Activated T-helper 2 cell treated with anti-CD3 and anti-CD28 coated beads, Interferon-gamma antibody, Interleukin-2, Interleukin-4, amounts not matched to agents 10 μg/mL and 5 μg/mL and 100 μg/mL, durations not matched to agents 14 hours and 24 hours and 36 hours (primary cell): ENCODE measurements at regions of chr1 and their contacts with region 1.

Region 1: DNA sequence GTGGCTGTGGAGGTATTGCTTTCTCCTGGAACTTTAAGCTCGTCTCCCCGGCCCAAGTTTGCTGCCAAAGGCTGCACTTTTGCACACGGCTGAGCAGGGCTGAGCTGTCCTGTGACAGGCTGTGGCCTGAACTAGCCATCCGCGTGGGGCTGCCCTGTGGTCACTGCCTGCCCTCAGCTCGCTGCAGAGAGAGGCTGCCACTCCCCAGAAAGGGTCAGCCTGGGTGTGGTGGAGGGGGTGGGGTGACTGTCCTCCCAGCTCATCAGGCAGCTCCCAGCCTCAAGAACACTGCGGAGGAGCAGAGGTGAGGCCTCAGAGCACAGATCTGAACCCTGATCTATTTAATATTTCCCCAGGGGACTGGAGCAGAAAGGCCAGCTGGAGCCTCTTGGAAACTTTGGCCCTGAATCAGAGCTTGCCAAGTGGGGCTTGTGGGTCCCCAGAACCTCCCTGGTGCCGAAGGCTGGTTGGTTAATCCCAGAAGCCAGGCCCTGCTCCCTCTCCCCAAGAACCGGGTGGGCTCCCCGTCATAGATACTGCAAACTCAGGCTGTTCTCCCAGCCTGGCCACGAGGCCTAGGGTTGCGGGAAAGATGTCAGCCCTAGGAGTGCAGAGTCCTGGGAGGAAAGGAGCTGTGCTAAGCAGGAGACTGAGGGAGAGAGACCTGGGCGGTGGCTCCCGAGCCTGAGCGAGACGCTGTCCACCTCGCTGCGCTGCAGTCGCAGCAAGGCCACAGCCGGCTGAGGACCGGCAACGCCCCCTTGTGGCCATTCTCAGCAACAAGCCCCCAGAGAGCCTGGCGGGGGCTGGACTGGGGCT is 125.1 kb upstream of the IPO9 start:
- DNase-seq: peak; percentile 44
- H3K4me3 Mint-ChIP-seq: no peak overlapping the region
- H3K27ac Mint-ChIP-seq: no peak overlapping the region
- H3K4me1 Mint-ChIP-seq: no peaks in the 10 kb centered on the region
- H3K27me3 Mint-ChIP-seq: no peaks in the 10 kb centered on the region

Region 2: DNA sequence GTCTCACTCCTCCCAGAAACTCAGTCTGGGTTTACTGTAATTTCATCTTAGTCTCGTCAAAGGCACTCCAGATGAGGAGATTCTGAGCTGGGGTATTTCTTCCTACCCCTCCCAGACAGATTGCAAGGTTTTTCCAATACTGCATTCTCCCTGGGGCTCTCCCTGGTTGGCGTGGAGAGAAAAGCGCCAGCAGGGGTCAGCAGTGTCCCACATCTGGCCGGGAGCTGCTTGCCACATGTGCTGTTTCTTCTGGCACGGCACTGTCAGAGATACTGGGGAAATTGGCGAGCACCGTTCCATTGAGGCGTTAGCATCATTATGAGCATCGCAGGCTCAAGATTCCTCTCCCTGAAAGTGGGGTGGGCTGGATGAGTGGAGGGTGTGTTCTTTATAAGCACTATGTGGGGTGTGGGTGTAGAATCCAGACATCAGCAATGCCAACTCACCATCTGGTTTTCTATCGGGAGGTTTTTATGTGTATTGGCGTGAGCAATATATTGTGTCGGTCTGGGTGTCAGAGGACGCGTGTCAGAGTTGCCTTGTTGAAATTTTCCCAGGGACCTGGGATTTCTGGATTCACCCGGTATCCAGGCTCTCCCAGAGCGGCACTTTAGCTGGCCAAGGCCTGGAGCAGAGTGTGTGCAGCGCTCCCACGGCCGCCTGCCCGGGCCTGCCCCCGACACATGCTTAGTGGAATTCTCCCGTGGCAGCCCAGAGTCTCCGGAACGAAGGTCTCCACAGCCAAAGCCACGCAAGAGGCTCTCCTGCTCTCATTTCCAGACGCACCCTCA is 172.9 kb before region 1 on chr1:
- intact Hi-C with region 1: loop called (anchors 1 kb)
- DNase-seq: no peak
- H3K4me3 Mint-ChIP-seq: no peak overlapping the region
- H3K27ac Mint-ChIP-seq: no peak overlapping the region
- H3K4me1 Mint-ChIP-seq: peaks cover 4% of the 10 kb centered on the region
- H3K27me3 Mint-ChIP-seq: no peaks in the 10 kb centered on the region

Region 3: DNA sequence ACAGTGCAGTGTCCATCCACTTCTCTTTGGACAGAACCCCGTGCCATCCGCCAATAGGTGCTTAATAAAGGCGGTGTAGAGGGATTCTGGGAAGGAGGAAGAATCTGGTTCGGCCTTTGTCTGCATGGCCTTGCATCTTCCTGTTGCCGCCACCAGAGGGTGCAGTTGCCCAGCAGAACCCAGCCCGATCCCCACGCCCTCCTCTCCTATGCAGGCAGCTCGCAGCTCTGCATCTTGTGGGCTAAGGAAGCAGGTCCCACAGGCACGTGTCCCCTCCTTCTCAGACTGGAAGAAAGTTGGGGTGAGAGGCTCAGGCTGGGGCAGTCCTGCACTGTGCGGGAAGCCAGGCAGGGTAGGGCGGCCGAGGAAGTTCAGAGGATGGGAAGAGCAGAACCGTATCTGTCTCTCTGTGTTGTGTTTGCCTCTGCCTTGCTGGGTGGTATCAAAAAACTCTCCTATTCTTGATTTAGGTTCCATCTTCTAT is 144.1 kb before region 1 on chr1:
- intact Hi-C with region 1: loop called (anchors 1 kb)
- DNase-seq: peak; percentile 45
- H3K4me3 Mint-ChIP-seq: no peak overlapping the region
- H3K27ac Mint-ChIP-seq: no peak overlapping the region
- H3K4me1 Mint-ChIP-seq: peaks cover 2% of the 10 kb centered on the region
- H3K27me3 Mint-ChIP-seq: no peaks in the 10 kb centered on the region

Region 4: GRCh38 chr1:201676197-201676596 is 27.6 kb before region 1 on chr1:
- intact Hi-C with region 1: no loop called
- DNase-seq: no peak
- H3K4me3 Mint-ChIP-seq: no peak overlapping the region
- H3K27ac Mint-ChIP-seq: no peak overlapping the region
- H3K4me1 Mint-ChIP-seq: no peaks in the 10 kb centered on the region
- H3K27me3 Mint-ChIP-seq: peaks cover 12% of the 10 kb centered on the region

Region 5: GRCh38 chr1:201686714-201687455 is 16.9 kb before region 1 on chr1:
- intact Hi-C with region 1: no loop called
- DNase-seq: no peak
- H3K4me3 Mint-ChIP-seq: no peak overlapping the region
- H3K27ac Mint-ChIP-seq: no peak overlapping the region
- H3K4me1 Mint-ChIP-seq: no peaks in the 10 kb centered on the region
- H3K27me3 Mint-ChIP-seq: no peaks in the 10 kb centered on the region